Posterior cingulate gyrus (tissue), 11 donors: ENCODE measurements at regions of chr5 and their contacts with region 1.

Region 1: DNA sequence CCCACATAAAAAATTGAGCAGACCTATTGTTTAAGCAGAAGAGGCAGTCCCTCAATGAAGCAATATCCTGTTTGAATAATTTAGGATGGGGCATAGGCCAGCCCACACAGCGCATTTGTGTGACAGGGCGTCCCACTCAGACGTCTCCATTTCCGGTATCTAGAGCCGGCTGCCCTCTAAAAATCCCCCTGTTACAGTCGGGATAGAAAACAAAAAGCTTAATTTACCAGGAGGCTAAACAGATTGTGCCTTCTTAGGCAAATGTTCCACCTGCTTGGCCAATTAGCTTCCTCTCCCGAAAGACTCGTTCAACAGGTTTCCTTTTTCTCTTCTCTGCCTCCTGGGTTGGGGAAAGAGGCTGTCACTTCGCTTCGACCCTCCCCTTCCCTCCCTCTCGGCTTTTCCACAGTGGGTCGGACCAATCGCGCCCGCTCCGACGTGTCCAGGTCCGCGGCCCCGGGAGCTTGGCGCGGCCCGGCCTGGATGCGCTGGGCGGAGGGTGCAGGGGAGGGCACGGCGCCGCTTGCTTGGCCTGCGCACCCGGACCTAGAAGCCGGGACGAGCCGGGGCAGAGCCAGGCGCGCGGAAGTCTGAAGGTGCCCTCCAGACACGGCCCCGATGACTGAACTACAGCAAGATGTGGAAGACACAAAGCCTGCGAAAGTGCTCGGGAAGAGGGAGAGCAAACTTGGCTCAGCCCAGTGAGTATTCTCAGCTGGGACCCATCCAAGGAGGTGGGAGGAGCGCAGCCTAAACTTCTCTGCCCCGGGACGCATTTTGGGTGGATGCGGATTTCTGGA is at the start of gene GRAMD2B:
- DNase-seq: peak; percentile 67 to 95 (median 74)

Region 2: GRCh38 chr5:126462239-126463014 is 39.2 kb after region 1 on chr5:
- intact Hi-C with region 1: no loop called
- DNase-seq: no peak

Region 3: DNA sequence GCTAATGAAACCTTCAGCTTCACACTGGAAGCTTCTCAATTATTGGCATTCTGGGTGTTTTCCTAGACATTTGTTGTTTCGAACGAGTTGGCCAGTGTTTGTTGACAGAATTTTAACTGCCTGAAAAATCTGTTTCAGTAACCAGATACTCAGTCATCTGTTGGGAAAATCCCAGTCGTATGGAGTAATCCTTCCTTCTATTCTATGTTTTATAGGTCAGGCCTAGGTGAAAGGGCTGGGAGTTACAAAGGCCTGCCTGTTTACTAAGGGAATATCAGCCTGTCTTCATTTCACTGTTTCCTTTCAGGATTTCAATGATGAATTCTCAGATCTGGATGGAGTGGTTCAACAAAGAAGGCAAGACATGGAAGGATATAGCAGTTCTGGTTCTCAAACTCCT is 60.0 kb after region 1 on chr5:
- intact Hi-C with region 1: loop called (anchors 10 kb)
- DNase-seq: no peak

Region 4: DNA sequence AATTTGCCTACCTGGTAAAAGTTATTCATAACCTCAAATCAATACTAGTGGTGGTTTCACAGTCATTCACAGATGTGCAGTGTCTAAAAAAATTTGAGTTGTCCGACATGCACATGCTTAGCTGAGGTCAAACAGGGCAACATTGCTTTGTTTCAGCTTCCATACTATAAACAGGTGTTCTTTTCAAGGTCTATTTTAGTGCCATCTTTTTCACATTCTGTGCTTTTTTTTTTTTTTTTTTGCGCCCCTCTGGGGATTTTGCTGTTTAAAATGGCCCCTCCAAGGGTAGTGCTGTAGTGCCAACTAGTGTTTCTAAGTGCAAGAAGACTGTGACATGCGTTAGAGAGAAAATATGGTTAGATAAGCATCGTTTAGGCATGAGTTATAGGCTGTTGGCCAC is 192.1 kb after region 1 on chr5:
- intact Hi-C with region 1: no loop called
- DNase-seq: no peak